AG04449 (cell line): ENCODE measurements at regions of chr2 and their contacts with region 1.

Region 1: GRCh38 chr2:176088048-176088936 is 4.2 kb upstream of the HOXD13 start:
- DNase-seq: no peak
- H3K4me3 ChIP-seq: peak overlapping the region; percentile 36
- CTCF ChIP-seq: peak; percentile 90

Region 2: GRCh38 chr2:175366815-175367214 is 721.5 kb before region 1 on chr2:
- CTCF ChIA-PET with region 1: interaction called, 18 read pairs
- POLR2A ChIA-PET with region 1: no interaction called
- DNase-seq: no peak
- H3K4me3 ChIP-seq: no peak overlapping the region
- CTCF ChIP-seq: peak; percentile 72

Region 3: DNA sequence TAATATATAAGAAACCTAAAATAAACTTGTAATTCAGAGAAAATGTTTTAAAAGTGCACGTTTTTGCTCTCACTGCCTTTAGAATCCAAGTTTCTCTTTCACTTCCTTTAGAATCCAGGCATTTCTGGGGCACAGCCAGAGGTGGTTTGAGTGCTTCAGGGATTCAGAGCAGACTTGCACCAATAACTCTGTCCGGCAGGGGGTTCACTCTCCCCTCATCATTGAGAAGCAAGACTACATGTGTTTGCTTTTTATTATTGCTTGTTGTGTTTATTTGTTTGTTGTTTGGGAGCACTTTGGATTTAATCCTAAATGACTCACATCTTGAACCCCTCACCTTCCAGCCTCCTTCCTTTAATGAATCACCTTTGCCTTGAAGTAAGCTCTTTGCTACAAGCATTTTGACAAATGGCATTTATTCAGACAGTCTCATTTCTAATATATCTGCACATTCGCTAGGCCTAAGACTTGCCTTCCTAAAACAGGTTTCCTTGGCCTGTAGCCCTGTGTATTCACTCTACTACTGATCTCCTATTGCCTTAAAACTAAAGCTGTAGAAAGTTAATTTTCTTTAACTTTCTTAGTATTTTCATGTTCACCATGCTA is 673.3 kb before region 1 on chr2:
- CTCF ChIA-PET with region 1: interaction called, 18 read pairs
- POLR2A ChIA-PET with region 1: no interaction called
- DNase-seq: peak; percentile 16
- H3K4me3 ChIP-seq: no peak overlapping the region
- CTCF ChIP-seq: peak; percentile 65

Region 4: DNA sequence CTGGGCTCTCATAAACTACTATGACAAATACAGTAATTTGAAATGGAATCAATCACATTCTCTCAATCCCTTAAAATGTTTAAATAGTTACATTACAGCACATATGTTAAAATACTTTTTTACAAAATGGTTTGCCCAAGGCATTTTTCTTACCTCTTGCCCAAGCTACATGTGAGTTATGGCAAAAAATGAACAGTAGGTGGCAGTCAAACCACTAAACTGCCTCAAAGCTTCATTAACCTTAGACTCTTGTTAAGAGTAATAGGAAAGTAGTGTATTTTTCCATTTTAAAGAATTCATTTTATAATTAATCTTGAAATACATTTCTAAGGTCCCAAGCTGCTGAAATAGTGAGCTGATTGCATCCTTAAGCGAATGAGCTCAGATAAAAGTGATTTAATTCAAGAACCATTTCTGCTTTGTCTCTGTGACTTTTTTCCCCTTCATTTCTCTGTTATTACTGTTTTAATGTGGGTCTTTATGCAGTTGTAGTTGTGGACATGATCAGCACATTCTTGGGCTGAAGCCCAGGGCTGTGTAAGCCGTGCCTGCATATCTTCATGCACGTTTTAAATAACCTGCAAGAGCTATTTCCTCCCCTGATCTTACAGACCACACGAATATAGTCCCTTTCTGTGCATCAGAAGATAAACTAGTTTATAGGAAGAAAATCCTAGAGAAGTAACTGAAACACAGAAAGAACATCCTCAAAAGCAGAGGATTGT is 398.0 kb before region 1 on chr2:
- CTCF ChIA-PET with region 1: interaction called, 115 read pairs
- POLR2A ChIA-PET with region 1: no interaction called
- DNase-seq: peak; percentile 24
- H3K4me3 ChIP-seq: no peak overlapping the region
- CTCF ChIP-seq: peak; percentile 35

Region 5: GRCh38 chr2:176110975-176111663 is 22.8 kb after region 1 on chr2:
- CTCF ChIA-PET with region 1: interaction called, 10 read pairs
- POLR2A ChIA-PET with region 1: no interaction called
- DNase-seq: no peak
- H3K4me3 ChIP-seq: no peak overlapping the region
- CTCF ChIP-seq: peak; percentile 85